Astrocyte of the cerebellum (primary cell): ENCODE measurements at regions of chr2 and their contacts with region 1.

Region 1: DNA sequence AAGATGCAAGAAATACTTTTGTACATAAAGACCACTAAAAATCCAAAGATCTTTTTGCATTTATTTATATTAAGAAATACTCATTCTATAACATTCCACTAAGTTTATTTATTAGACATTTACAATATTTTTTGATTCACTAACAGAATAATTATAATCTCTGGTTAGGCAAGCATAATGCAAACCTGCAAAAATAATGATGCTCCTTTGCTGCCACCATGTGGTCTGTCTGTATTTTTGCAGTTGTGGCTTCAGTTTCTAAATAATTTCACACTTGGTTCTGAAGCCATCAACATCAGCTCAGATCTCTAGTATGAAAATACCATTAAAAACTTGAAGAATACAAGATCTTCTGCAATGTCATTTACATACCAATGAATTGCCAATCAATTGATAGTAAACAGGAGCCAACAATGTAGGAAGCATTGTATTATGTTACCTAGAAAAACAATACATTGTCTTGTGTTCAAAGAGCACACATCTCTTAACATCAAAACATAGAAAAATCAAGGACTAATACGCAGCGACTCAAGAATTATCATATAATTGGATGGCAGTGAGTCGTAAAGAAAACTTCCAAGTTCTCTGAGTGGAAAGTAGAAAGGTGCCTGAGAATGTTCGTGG is 28.8 kb upstream of the WDR75 start:
- DNase-seq: peak; percentile 66
- H3K4me3 ChIP-seq: no peak overlapping the region
- CTCF ChIP-seq: peak; percentile 42

Region 2: DNA sequence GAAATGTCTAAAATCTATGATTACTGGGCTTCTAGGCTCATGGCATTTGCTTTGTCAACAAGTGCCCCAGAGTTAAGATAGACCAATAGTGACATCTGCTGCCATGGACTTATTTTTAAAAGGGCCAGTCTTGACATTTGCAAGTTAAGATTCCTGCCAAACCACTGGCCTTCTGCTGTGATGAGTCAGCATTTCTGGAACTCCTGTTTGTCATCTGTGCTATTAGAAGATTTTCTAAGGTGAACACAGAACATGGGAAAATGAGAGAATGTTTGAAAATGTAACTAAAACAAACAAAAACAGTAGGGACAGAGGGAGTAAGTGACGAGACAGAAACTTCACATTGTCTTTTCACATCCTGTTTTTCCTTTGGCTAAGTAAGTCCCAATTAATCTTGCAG is 64.9 kb before region 1 on chr2:
- in situ Hi-C with region 1: loop called (anchors 5 kb)
- DNase-seq: peak; percentile 97
- H3K4me3 ChIP-seq: no peak overlapping the region
- CTCF ChIP-seq: peak; percentile 41